Sciatic nerve (tissue), 2 donors: ENCODE measurements at regions of chr1 and their contacts with region 1.

Region 1: DNA sequence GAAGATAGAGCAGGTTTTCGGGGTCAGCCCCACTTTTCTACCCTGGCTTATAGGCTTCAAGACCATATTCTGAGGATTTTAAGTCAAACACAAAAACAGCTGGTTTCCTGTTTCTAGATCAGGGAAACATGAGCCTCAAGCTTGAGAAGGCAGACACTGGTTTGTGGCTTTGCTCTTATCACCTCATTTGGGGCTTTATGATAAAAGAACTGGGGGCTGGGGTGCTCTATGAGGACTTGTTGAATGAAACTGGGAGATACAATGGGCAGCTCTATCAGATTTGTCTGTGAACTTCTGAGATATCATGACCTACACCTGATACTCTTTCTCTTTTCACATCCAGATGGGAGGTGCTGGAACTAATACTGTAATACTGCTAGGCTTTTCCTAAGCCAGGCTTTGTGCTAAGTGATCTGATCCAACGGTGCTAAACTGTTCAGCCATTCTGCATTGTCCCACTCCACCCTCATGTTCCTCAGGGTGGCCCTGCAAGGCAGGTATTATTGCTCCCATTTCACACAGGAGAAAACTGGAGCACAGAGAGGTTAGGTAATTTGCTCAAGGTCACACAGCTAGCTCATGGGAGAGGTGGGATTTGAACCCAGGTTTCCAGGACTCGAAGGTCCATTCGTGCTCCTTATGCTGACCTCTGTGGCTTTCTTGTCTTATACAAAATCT is 6.6 kb downstream of the AJAP1 start:
- DNase-seq: no peak
- ATAC-seq: no peak

Region 2: DNA sequence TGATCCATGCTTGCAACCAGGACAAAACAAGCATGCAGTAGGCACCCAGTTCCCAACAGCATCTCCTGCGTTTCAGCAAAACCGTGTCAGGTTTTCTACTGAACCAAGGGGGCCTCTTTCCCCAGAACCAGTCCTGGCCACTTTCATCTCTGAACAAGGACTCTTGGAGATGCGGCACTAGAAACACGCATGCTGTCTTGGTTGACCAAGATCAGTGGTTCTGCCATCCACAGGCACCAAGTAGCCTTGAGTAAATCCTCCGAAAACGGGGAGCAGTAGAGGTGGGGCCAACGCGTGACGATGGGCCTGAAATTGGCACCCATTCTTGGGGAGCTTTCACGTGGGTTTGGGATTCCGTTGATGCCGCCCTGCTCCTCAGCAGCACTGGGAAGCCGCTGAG is 69.1 kb before region 1 on chr1:
- intact Hi-C with region 1: loop called (anchors 2 kb)
- DNase-seq: peak; percentile 31
- ATAC-seq: no peak

Region 3: GRCh38 chr1:4702932-4703331 is 41.9 kb after region 1 on chr1:
- intact Hi-C with region 1: no loop called
- DNase-seq: no peak
- ATAC-seq: no peak